Activated naive CD4-positive, alpha-beta T cell treated with anti-CD3 and anti-CD28 coated beads for 36 hours (primary cell): ENCODE measurements at regions of chr2 and their contacts with region 1.

Region 1: DNA sequence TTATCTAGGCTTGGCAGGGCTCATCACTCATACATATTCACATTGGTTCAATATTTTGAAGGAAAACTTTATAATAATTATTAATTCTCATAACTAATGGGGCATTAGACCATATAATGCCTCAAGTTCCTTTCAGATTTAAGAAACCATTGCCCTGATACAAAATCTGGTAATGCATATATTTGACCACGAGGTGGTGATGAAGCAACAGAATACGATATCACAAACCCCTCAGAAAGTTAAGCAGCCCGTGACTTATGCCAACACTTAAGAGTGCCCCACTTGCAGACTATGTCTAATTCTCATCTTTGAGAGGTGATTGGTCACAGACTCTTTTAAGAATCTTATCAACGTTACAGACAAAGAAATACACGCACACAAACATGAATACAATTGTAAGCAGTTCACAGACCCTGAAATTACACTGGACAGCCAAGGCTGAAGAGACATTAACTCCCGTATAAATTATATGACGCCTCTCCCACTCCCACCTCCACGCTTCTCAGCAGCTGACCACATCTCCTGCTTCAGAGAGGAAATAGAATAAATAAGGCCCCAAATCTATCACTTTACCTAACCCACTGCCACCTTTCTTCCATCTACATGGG is 20.7 kb upstream of the DNAH6 start:
- DNase-seq: peak; percentile 45
- H3K4me3 Mint-ChIP-seq: no peak overlapping the region
- H3K27ac Mint-ChIP-seq: no peak overlapping the region
- H3K4me1 Mint-ChIP-seq: peaks cover 24% of the 10 kb centered on the region
- H3K27me3 Mint-ChIP-seq: no peaks in the 10 kb centered on the region

Region 2: GRCh38 chr2:84459018-84459943 is 36.4 kb before region 1 on chr2 and contains the start of gene SUCLG1:
- CTCF ChIA-PET with region 1: no interaction called
- intact Hi-C with region 1: loop called (anchors 1 kb)
- DNase-seq: peak; percentile 89
- H3K4me3 Mint-ChIP-seq: peak within 1 kb of the TSS; percentile 86
- H3K27ac Mint-ChIP-seq: peak within 1 kb of the TSS; percentile 92
- H3K4me1 Mint-ChIP-seq: peaks cover 40% of the 10 kb centered on the region
- H3K27me3 Mint-ChIP-seq: no peaks in the 10 kb centered on the region
- total RNA-seq, gene SUCLG1: 75.3 to 80.7 TPM

Region 3: DNA sequence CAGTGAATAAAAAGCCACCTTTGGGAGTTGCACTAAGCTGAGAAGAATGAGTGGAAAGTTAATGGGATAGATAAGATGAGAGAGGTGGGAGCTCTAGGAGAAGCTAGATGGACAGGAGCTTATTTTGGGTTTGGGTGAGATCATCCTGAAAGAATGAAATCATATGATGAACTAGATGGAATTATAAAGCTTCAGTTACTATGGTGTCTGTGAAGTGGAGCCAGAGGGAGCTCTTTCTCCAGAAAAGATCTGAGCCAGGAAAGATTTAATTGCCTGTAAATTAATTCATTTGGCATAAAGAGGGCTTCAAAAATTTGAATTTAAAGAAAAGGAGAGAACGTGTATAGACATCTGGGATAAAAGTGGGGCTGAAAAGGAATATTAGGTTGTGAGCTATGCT is 30.9 kb after region 1 on chr2:
- CTCF ChIA-PET with region 1: no interaction called
- intact Hi-C with region 1: loop called (anchors 1 kb)
- DNase-seq: no peak
- H3K4me3 Mint-ChIP-seq: no peak overlapping the region
- H3K27ac Mint-ChIP-seq: peak overlapping the region; percentile 50
- H3K4me1 Mint-ChIP-seq: peaks cover 17% of the 10 kb centered on the region
- H3K27me3 Mint-ChIP-seq: no peaks in the 10 kb centered on the region

Region 4: GRCh38 chr2:84649487-84650142 is 154.0 kb after region 1 on chr2:
- CTCF ChIA-PET with region 1: no interaction called
- intact Hi-C with region 1: loop called (anchors 5 kb)
- DNase-seq: no peak
- H3K4me3 Mint-ChIP-seq: peak overlapping the region; percentile 0
- H3K27ac Mint-ChIP-seq: peak overlapping the region; percentile 60
- H3K4me1 Mint-ChIP-seq: peaks cover 75% of the 10 kb centered on the region
- H3K27me3 Mint-ChIP-seq: no peaks in the 10 kb centered on the region

Region 5: DNA sequence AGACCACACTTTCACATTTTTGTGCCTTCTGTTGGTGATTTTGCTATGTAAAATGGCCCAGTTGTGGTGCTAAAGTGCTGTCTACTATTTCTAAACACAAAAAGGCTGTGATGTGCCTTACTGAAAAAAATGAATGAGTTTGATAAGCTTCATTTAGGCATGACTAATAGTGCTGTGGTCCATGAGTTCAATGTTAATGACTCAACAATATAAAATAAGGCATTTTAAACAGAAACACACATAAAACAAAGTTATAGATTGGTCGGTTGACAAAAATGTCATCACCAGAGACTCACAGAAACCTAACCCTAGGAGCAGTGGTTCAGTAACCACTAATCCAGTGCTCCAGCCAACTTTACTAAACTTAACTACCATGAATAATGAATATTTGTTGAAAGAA is 180.7 kb after region 1 on chr2:
- CTCF ChIA-PET with region 1: no interaction called
- intact Hi-C with region 1: no loop called
- DNase-seq: no peak
- H3K4me3 Mint-ChIP-seq: no peak overlapping the region
- H3K27ac Mint-ChIP-seq: no peak overlapping the region
- H3K4me1 Mint-ChIP-seq: peaks cover 19% of the 10 kb centered on the region
- H3K27me3 Mint-ChIP-seq: no peaks in the 10 kb centered on the region

Region 6: GRCh38 chr2:84741296-84741765 is 245.7 kb after region 1 on chr2:
- CTCF ChIA-PET with region 1: no interaction called
- intact Hi-C with region 1: loop called (anchors 2 kb)
- DNase-seq: peak; percentile 79
- H3K4me3 Mint-ChIP-seq: no peak overlapping the region
- H3K27ac Mint-ChIP-seq: no peak overlapping the region
- H3K4me1 Mint-ChIP-seq: peaks cover 24% of the 10 kb centered on the region
- H3K27me3 Mint-ChIP-seq: no peaks in the 10 kb centered on the region

Region 7: DNA sequence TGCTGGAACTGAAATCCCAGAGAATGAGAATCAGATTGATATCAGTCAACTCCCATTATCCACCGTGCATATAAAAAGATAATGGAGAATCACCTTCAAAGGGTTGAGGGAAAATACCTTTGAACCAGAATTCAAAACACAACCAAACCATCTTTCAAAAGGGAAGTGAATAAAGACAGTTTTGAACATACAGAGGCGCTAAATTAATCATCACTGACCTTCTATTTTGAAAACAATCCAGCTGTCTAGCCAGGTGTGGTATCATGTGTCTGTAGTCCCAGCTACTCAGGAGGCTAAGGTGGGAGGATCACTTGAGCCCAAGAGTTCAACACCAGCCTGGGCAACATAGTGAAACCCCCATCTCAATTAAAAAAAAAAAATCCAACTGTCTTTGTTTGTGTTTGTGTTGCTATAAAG is 321.6 kb after region 1 on chr2:
- CTCF ChIA-PET with region 1: interaction called, 5 read pairs
- intact Hi-C with region 1: loop called (anchors 2 kb)
- DNase-seq: peak; percentile 35
- H3K4me3 Mint-ChIP-seq: no peak overlapping the region
- H3K27ac Mint-ChIP-seq: peak overlapping the region; percentile 57
- H3K4me1 Mint-ChIP-seq: peaks cover 41% of the 10 kb centered on the region
- H3K27me3 Mint-ChIP-seq: no peaks in the 10 kb centered on the region

Region 8: DNA sequence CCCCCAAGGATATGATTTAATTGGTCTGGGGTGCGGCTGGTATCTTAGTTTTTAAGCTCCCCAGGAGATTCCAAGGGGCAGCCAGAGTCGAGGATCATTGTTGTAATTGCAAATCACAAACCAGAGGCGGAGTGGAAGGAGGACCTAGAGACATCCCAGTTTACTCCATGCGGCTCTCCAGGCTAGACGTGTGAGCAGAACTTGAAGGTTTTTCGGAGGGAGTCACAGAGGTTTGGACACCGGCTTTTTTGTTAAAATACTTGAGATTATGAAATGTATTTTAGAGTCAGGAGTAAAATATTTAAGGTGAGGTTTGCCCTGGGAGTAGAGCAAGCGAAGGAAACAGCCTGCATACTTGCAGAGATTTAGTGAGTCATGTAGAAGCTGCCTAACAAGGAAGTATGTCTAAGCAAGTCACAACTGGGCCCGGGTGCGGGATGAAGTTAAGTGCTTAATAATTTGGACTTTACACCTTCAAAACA is 792.6 kb after region 1 on chr2:
- CTCF ChIA-PET with region 1: no interaction called
- intact Hi-C with region 1: loop called (anchors 1 kb)
- DNase-seq: no peak
- H3K4me3 Mint-ChIP-seq: no peak overlapping the region
- H3K27ac Mint-ChIP-seq: no peak overlapping the region
- H3K4me1 Mint-ChIP-seq: peaks cover 17% of the 10 kb centered on the region
- H3K27me3 Mint-ChIP-seq: no peaks in the 10 kb centered on the region